Calu3 (cell line): ENCODE measurements at regions of chr2 and their contacts with region 1.

Region 1: GRCh38 chr2:100291120-100291970 is 31.0 kb downstream of the LONRF2 start:
- DNase-seq: peak; percentile 85
- H3K4me3 Mint-ChIP-seq: no peak overlapping the region
- H3K27ac Mint-ChIP-seq: no peak overlapping the region
- H3K4me1 Mint-ChIP-seq: peaks cover 5% of the 10 kb centered on the region
- H3K27me3 Mint-ChIP-seq: no peaks in the 10 kb centered on the region
- CTCF ChIP-seq: no peak

Region 2: DNA sequence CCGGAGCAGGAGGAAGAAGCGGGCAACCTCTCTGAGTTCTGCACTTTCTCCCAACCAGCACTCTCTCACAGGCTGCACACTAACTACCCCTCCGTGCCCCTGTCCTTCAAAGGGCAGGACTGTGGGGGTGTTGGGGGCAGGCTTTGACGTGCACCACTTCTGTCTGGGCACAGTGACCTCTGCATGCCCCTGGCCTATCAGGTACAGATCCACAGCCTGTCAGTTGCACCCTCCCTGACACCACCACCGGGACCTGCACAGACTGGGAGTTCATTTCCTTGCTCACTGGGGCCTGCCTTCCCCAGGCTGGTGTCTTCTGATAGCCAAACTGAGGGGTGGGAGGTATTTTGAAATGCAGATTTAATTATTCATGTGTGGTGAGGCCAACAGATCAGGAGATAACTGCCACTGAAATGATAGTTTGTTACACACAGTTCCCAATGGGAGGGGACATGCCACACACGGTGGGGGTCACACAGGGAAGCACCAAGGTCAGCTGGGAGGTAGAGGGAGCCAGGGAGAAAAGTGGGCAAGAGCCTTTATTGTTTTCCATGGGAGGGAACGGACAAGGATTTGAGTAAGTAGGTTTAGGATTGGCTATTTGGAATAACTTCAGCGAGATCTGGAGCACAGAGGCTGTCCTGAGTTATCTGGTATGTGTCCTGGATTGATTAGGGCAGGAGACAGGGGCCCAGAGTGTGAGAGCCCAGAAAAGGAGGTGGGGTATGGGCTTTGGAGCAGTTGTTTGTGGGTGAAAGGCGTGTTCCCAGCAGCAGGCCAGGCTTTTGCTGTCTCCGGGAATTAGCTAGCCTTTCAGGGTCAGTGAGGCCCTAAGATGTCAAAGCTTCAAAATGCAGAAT is 400.5 kb before region 1 on chr2:
- CTCF ChIA-PET with region 1: no interaction called
- intact Hi-C with region 1: no loop called
- DNase-seq: no peak
- H3K4me3 Mint-ChIP-seq: no peak overlapping the region
- H3K27ac Mint-ChIP-seq: no peak overlapping the region
- H3K4me1 Mint-ChIP-seq: no peaks in the 10 kb centered on the region
- H3K27me3 Mint-ChIP-seq: peaks cover 16% of the 10 kb centered on the region
- CTCF ChIP-seq: no peak

Region 3: DNA sequence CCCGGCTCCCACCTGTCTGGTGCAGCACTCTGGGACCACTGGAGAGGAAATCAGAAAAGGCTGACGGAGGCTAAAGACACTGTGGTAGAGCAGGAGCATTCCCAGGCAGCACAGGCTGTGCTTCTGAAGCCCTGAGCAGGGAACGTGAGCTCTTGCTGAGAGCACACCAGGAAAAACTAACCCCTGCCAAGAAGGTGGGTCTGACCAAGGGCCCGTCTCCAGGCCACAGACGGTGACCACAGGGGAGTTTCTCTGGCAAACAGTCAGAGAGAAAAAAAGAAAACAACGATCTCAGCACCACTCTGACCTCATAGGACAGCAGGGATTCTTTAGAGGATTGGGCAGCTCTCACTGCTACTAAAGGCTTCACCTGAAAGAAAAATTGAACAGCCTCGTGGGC is 350.4 kb before region 1 on chr2:
- CTCF ChIA-PET with region 1: no interaction called
- intact Hi-C with region 1: no loop called
- DNase-seq: no peak
- H3K4me3 Mint-ChIP-seq: no peak overlapping the region
- H3K27ac Mint-ChIP-seq: no peak overlapping the region
- H3K4me1 Mint-ChIP-seq: no peaks in the 10 kb centered on the region
- H3K27me3 Mint-ChIP-seq: peaks cover 71% of the 10 kb centered on the region
- CTCF ChIP-seq: no peak

Region 4: GRCh38 chr2:100350707-100351106 is 59.4 kb after region 1 on chr2:
- CTCF ChIA-PET with region 1: no interaction called
- intact Hi-C with region 1: no loop called
- DNase-seq: no peak
- H3K4me3 Mint-ChIP-seq: no peak overlapping the region
- H3K27ac Mint-ChIP-seq: no peak overlapping the region
- H3K4me1 Mint-ChIP-seq: peaks cover 36% of the 10 kb centered on the region
- H3K27me3 Mint-ChIP-seq: no peaks in the 10 kb centered on the region
- CTCF ChIP-seq: no peak

Region 5: GRCh38 chr2:100365434-100365833 is 74.1 kb after region 1 on chr2:
- CTCF ChIA-PET with region 1: no interaction called
- intact Hi-C with region 1: loop called (anchors 5 kb)
- DNase-seq: peak; percentile 82
- H3K4me3 Mint-ChIP-seq: no peak overlapping the region
- H3K27ac Mint-ChIP-seq: peak overlapping the region; percentile 54
- H3K4me1 Mint-ChIP-seq: peaks cover 18% of the 10 kb centered on the region
- H3K27me3 Mint-ChIP-seq: no peaks in the 10 kb centered on the region
- CTCF ChIP-seq: no peak

Region 6: DNA sequence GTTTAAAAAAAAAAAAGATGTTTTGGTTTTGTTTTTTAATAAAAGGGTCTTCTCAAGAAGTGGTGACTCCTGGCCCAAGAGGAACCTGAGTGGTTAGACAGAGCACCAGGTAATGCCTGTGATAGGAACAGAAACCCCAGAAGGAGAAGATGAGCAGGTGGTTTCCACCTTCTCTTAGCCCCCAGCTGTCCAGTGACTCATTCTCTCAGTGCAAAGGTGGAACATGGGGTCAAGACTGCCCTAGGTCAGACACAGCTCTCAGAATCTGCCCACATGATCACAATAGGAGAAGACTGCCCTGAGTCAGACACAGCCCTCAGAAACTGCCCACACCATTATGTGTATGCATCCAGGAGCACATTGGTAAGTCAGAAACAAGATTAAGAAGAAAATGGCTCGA is 798.1 kb after region 1 on chr2:
- CTCF ChIA-PET with region 1: no interaction called
- intact Hi-C with region 1: no loop called
- DNase-seq: no peak
- H3K4me3 Mint-ChIP-seq: no peak overlapping the region
- H3K27ac Mint-ChIP-seq: no peak overlapping the region
- H3K4me1 Mint-ChIP-seq: peaks cover 10% of the 10 kb centered on the region
- H3K27me3 Mint-ChIP-seq: no peaks in the 10 kb centered on the region
- CTCF ChIP-seq: no peak